CD8-positive, alpha-beta T cell (primary cell): ENCODE measurements at regions of chr13 and their contacts with region 1.

Region 1: DNA sequence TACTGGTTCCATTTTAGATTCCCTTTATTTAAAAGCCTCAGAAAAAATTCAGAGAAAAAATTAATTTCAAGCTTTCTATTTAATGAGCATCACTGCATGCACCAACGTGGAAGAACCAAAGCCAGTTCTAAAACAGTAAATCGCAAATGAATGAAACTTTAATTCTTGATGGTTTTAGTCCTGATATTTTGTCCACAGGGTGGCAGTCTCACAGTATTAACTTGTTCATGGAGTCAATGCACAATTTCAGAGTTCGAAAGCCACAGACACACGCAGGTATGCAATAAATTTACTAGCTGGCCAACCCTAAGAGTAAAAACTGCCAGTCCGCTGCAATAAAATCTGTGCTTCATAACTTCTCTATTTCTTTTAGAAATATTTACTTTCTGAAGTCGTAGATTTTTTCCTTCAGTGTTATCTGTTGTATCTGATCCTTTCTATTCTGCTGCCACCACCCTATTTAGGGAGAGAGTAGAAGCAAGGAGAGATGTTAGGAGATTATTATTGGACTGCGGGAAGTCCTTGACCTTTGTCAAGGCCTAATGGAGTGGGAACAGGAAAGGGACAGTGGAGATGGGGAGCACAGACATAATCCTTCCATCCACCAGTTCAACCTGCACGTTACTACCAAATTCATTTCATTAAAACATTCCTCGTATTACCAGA is 7.0 kb upstream of the WBP4 start:
- DNase-seq: peak in 5 of 9 experiments; percentile 30 to 79 (median 57)
- ATAC-seq: peak; percentile 78
- H3K4me3 ChIP-seq: no peak overlapping the region
- H3K4me3 Mint-ChIP-seq: no peak overlapping the region
- H3K27ac ChIP-seq: no peak overlapping the region
- H3K27ac Mint-ChIP-seq: peak overlapping the region; percentile 4
- H3K4me1 ChIP-seq: peaks cover 15% of the 10 kb centered on the region
- H3K4me1 Mint-ChIP-seq: peaks cover 51% of the 10 kb centered on the region
- H3K27me3 ChIP-seq: no peaks in the 10 kb centered on the region
- H3K27me3 Mint-ChIP-seq: no peaks in the 10 kb centered on the region
- CTCF ChIP-seq: peak; percentile 66

Region 2: DNA sequence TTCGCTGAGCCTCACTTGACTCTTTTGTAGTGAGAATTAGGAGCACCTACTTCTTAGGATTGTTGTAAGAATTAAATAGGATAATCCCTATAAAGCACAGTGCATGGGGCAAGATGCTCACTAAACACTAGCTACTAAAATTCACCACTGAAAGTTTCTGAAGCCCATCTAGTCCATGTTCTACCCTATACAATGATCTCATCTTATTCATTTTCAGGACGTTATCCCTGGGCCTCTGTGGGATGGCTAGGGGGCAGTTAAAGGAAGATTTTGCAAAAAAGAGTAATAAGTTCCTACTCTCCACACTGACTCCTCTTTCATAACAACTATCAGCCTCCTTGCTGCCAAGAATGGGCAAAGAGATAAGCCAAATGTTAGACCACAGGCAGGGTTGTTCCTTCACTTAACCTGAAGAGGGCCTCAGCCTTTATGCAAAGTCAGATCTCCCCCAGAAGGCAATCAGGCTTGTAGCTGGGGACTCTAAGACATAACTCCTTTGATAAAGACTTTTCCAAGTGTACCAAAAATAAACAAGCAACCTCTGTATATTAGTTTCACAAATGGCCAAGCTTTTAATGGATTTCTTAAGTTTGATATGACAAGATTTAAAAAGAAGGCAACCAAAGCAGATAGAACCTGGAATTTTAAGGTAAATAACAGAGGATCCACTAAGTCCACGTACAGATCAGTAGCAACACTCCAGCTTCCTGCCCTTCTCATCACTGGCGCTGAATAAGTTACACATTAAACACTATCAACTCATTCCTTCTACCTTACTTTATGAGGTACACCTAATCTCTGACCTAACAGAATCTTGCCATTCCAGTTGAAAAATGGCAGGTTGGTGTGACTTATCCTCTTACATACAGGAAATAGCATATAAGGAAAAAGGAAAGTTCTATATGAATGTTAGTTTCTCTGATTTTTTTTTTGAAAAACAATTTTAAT is 79.6 kb before region 1 on chr13:
- CTCF ChIA-PET with region 1: interaction called, 21 read pairs
- POLR2A ChIA-PET with region 1: interaction called, 13 read pairs
- intact Hi-C with region 1: loop called (anchors 1 to 2 kb)
- DNase-seq: peak in 5 of 9 experiments; percentile 34 to 82 (median 55)
- ATAC-seq: peak; percentile 84
- H3K4me3 ChIP-seq: peak overlapping the region in 1 of 2 experiments; percentile 8
- H3K4me3 Mint-ChIP-seq: peak overlapping the region; percentile 63
- H3K27ac ChIP-seq: peak overlapping the region in 1 of 2 experiments; percentile 50
- H3K27ac Mint-ChIP-seq: peak overlapping the region; percentile 68
- H3K4me1 ChIP-seq: peaks cover 82% of the 10 kb centered on the region
- H3K4me1 Mint-ChIP-seq: peaks cover 93% of the 10 kb centered on the region
- H3K27me3 ChIP-seq: no peaks in the 10 kb centered on the region
- H3K27me3 Mint-ChIP-seq: no peaks in the 10 kb centered on the region
- CTCF ChIP-seq: peak; percentile 66

Region 3: DNA sequence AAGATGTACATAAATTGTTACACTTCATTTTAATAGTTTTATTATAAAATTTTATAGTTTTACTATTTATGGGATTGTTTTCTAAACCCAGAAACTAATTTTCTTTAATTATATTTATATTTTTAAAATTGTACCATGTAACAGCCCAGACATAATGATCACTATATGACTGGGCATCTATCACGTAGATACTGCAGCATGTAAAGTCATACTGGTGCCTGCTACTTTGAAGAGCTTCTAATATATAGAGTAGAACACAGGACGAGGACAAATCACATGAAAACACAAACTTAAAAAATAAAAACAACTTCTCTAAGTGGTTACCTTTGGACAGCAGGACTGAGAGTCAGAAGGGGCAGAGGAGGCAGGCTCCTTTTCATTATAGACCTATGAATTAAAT is 40.5 kb before region 1 on chr13:
- CTCF ChIA-PET with region 1: interaction called, 19 read pairs
- POLR2A ChIA-PET with region 1: interaction called, 45 read pairs
- intact Hi-C with region 1: loop called in 1 of 2 experiments (anchors 1 kb)
- DNase-seq: no peak
- ATAC-seq: no peak
- H3K4me3 ChIP-seq: peak overlapping the region in 1 of 2 experiments; percentile 24
- H3K4me3 Mint-ChIP-seq: peak overlapping the region; percentile 88
- H3K27ac ChIP-seq: peak overlapping the region in 1 of 2 experiments; percentile 58
- H3K27ac Mint-ChIP-seq: peak overlapping the region; percentile 94
- H3K4me1 ChIP-seq: peaks cover 51% of the 10 kb centered on the region
- H3K4me1 Mint-ChIP-seq: peaks cover 64% of the 10 kb centered on the region
- H3K27me3 ChIP-seq: no peaks in the 10 kb centered on the region
- H3K27me3 Mint-ChIP-seq: no peaks in the 10 kb centered on the region
- CTCF ChIP-seq: no peak

Region 4: DNA sequence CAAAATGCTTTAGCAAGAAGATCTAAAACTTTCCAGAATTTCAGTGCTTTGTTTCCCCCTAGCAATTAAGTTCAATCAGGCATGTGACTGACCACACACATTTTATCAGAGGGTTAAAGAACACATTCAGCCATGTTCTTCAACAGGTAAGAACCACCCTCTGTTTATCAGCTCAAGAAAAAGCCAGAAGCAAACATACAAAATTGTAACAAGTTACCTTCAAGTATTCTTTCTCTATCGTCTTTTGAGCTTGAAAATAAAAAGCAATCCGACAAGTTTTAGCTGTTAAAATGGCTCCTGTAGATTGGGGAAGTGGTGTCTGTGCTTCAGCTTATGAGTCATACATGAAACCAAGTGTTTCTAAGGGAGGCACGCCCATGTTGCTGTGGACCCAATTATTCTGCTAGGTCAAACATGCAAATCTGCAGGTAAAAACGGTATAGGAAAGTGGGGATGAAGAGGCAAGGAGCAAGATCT is 35.3 kb before region 1 on chr13 and contains the start of gene ELF1:
- CTCF ChIA-PET with region 1: interaction called, 19 read pairs
- POLR2A ChIA-PET with region 1: interaction called, 45 read pairs
- intact Hi-C with region 1: loop called in 1 of 2 experiments (anchors 1 kb)
- DNase-seq: peak in 8 of 9 experiments; percentile 28 to 89 (median 63)
- ATAC-seq: peak; percentile 88
- H3K4me3 ChIP-seq: peak within 1 kb of the TSS; percentile 56 to 68
- H3K4me3 Mint-ChIP-seq: peak within 1 kb of the TSS; percentile 88
- H3K27ac ChIP-seq: peak within 1 kb of the TSS; percentile 91 to 95
- H3K27ac Mint-ChIP-seq: peak within 1 kb of the TSS; percentile 97
- H3K4me1 ChIP-seq: peaks cover 25% of the 10 kb centered on the region
- H3K4me1 Mint-ChIP-seq: peaks cover 47% of the 10 kb centered on the region
- H3K27me3 ChIP-seq: no peaks in the 10 kb centered on the region
- H3K27me3 Mint-ChIP-seq: no peaks in the 10 kb centered on the region
- CTCF ChIP-seq: no peak
- total RNA-seq, gene ELF1: 308 to 313 TPM

Region 5: DNA sequence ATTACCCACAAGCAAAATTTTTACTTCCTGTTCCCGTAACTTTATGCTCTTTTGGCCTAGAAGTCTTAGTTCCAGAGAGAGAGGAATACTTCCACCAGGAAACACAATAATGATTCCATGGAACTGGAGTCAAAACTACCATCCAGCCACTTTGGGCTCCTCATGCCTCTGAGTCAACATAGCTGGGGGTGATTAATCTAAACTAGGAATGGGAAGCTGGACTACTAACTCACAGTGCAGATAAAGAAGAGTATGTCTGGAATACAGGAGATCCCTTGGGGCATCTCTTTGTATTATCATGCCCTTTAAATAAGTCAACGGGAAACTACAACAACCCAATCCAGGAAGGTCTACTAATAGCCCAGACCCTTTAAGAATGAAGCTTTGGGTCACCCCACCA is 26.3 kb before region 1 on chr13:
- CTCF ChIA-PET with region 1: interaction called, 18 read pairs
- POLR2A ChIA-PET with region 1: no interaction called
- intact Hi-C with region 1: no loop called
- DNase-seq: no peak
- ATAC-seq: no peak
- H3K4me3 ChIP-seq: no peak overlapping the region
- H3K4me3 Mint-ChIP-seq: no peak overlapping the region
- H3K27ac ChIP-seq: no peak overlapping the region
- H3K27ac Mint-ChIP-seq: no peak overlapping the region
- H3K4me1 ChIP-seq: peaks cover 9% of the 10 kb centered on the region
- H3K4me1 Mint-ChIP-seq: peaks cover 28% of the 10 kb centered on the region
- H3K27me3 ChIP-seq: no peaks in the 10 kb centered on the region
- H3K27me3 Mint-ChIP-seq: no peaks in the 10 kb centered on the region
- CTCF ChIP-seq: no peak

Region 6: DNA sequence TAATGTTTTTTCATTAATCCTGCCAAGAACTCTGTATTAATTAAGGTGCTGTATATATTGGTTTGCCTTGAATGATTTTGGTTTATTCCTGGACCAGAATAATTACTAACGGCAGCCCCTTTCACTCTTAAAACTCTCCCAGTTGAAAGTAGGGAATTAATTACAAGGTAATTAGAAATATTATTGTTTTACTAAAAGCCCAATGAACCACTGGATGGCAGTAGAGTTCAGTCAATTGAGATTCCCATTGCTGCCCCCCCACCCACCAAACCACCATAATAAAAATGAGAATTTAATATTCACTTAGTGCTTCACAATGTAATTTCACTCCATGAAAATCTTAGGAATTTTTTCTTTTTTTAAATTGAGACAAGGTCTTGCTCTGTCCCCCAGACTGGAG is 20.7 kb after region 1 on chr13:
- CTCF ChIA-PET with region 1: interaction called, 15 read pairs
- POLR2A ChIA-PET with region 1: no interaction called
- intact Hi-C with region 1: no loop called
- DNase-seq: peak in 5 of 9 experiments; percentile 23 to 70 (median 49)
- ATAC-seq: peak; percentile 63
- H3K4me3 ChIP-seq: no peak overlapping the region
- H3K4me3 Mint-ChIP-seq: no peak overlapping the region
- H3K27ac ChIP-seq: no peak overlapping the region
- H3K27ac Mint-ChIP-seq: no peak overlapping the region
- H3K4me1 ChIP-seq: no peaks in the 10 kb centered on the region
- H3K4me1 Mint-ChIP-seq: no peaks in the 10 kb centered on the region
- H3K27me3 ChIP-seq: no peaks in the 10 kb centered on the region
- H3K27me3 Mint-ChIP-seq: no peaks in the 10 kb centered on the region
- CTCF ChIP-seq: peak; percentile 72

Region 7: GRCh38 chr13:41222259-41222852 is 168.0 kb after region 1 on chr13:
- CTCF ChIA-PET with region 1: interaction called, 16 read pairs
- POLR2A ChIA-PET with region 1: no interaction called
- intact Hi-C with region 1: loop called (anchors 1 to 2 kb)
- DNase-seq: peak; percentile 9 to 70 (median 46)
- ATAC-seq: peak; percentile 98
- H3K4me3 ChIP-seq: no peak overlapping the region
- H3K4me3 Mint-ChIP-seq: no peak overlapping the region
- H3K27ac ChIP-seq: no peak overlapping the region
- H3K27ac Mint-ChIP-seq: no peak overlapping the region
- H3K4me1 ChIP-seq: no peaks in the 10 kb centered on the region
- H3K4me1 Mint-ChIP-seq: peaks cover 3% of the 10 kb centered on the region
- H3K27me3 ChIP-seq: no peaks in the 10 kb centered on the region
- H3K27me3 Mint-ChIP-seq: no peaks in the 10 kb centered on the region
- CTCF ChIP-seq: peak; percentile 78